AG04449 (cell line): ENCODE measurements at regions of chr2 and their contacts with region 1.

Region 1: GRCh38 chr2:118040891-118041290 is 27.0 kb upstream of the CCDC93 start:
- DNase-seq: no peak
- H3K4me3 ChIP-seq: no peak overlapping the region
- CTCF ChIP-seq: no peak

Region 2: DNA sequence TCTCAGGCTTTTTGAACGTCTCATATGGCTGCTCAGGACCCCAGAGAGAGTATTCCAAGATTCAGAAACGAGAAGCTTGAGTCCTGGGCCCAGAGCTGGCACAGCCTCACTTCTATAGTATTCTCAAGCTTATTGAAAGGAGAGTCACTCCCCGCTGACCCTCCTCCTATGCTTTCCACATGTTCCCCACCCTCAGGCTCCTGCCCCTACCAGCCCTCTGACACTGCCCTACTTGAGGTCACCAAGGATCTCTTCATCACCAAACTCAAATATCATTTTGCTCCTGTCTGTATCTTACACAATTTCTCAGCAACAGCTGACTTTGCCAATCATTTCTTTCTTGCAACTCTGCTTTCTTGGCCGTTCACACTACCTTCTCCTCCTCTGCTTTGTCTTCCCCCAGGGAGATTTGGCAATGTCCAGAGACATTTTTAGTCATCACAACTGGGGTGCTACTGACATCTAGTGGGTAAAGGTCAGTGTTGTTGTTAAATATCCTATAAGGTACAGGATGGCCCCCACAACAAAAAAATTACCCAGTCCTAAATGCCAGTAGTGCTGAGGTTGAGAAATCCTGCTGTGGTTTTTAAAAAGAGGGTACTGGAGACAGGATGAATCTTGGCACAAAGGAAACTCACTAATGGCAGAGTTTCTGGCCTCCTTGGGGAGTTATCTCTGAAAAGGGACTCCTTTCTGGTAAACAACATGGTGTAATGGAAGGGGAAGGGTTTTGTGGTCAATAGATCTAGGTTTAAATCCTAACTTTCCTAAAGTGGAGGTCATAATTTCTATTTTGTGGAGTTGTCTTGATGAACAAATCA is 20.5 kb after region 1 on chr2:
- CTCF ChIA-PET with region 1: interaction called, 235 read pairs
- POLR2A ChIA-PET with region 1: no interaction called
- DNase-seq: no peak
- H3K4me3 ChIP-seq: no peak overlapping the region
- CTCF ChIP-seq: peak; percentile 36

Region 3: DNA sequence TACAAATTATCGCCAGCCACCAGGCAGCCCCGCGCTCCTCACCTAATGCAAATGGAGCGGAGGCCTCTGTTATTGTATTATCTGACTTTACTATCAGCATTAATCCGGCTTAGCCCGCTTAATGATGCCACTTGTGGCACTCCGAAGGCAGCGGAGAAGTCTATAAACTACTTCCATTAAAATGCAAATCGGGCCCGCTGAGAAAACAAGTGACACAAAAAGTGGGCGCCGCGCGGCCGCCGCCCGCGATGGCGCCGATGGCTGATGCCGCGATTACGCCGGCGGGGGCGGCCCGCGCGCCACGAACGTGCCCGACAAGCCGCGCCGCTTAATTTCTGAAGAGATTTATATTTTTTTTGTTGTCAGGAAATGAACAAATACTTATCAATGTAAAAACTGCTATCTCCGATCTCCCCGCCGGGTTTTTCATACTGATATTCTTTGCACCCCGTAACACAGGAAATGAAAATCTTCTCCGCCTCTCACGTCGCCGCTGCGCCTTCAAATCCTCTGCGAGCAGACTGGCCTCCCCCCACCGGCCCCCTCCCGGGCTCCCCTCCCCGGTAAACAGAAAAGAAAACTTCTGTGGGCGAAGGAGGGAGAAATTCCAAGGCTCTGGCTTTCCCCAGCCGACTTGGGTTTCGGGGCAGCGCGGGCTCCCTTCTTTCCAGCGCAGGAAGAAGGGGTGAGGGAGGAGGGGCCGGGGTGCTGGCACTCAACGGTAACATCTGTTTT is 269.2 kb after region 1 on chr2:
- CTCF ChIA-PET with region 1: no interaction called
- POLR2A ChIA-PET with region 1: no interaction called
- DNase-seq: no peak
- H3K4me3 ChIP-seq: peak overlapping the region; percentile 53
- CTCF ChIP-seq: no peak